AG04449 (cell line): ENCODE measurements at regions of chr17 and their contacts with region 1.

Region 1: GRCh38 chr17:29148790-29149430 is 31.3 kb downstream of the MYO18A start:
- DNase-seq: no peak
- H3K4me3 ChIP-seq: peak overlapping the region; percentile 54
- CTCF ChIP-seq: peak; percentile 96

Region 2: GRCh38 chr17:29032857-29033197 is 116.1 kb before region 1 on chr17:
- CTCF ChIA-PET with region 1: no interaction called
- POLR2A ChIA-PET with region 1: no interaction called
- DNase-seq: no peak
- H3K4me3 ChIP-seq: no peak overlapping the region
- CTCF ChIP-seq: no peak

Region 3: DNA sequence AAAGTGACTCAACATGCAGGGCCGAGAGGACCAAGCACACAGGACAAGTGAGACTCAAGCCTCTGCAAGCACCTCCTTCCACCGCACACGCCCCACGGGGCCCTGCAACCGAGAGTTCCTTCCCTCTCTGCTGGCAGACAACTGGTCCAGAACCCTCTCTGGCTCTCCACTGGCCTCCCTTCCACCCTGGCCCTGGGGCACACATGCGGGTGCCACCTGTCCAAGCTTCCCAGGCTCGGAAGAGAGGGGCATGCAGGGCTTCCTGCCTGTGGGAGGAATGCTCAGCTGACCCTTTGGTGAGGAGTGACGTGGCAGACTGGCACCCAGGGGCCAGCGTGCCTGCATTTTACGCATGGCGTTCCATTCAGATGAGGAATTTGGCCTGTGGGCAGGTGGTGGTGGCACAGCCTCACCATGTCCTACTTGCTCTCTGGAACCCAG is 46.1 kb before region 1 on chr17:
- CTCF ChIA-PET with region 1: no interaction called
- POLR2A ChIA-PET with region 1: no interaction called
- DNase-seq: no peak
- H3K4me3 ChIP-seq: no peak overlapping the region
- CTCF ChIP-seq: no peak

Region 4: GRCh38 chr17:29116804-29117772 is 31.8 kb before region 1 on chr17:
- CTCF ChIA-PET with region 1: interaction called, 138 read pairs
- POLR2A ChIA-PET with region 1: no interaction called
- DNase-seq: no peak
- H3K4me3 ChIP-seq: no peak overlapping the region
- CTCF ChIP-seq: peak; percentile 92

Region 5: GRCh38 chr17:29133146-29133713 is 15.7 kb before region 1 on chr17:
- CTCF ChIA-PET with region 1: interaction called, 118 read pairs
- POLR2A ChIA-PET with region 1: interaction called, 3 read pairs
- DNase-seq: no peak
- H3K4me3 ChIP-seq: no peak overlapping the region
- CTCF ChIP-seq: no peak

Region 6: DNA sequence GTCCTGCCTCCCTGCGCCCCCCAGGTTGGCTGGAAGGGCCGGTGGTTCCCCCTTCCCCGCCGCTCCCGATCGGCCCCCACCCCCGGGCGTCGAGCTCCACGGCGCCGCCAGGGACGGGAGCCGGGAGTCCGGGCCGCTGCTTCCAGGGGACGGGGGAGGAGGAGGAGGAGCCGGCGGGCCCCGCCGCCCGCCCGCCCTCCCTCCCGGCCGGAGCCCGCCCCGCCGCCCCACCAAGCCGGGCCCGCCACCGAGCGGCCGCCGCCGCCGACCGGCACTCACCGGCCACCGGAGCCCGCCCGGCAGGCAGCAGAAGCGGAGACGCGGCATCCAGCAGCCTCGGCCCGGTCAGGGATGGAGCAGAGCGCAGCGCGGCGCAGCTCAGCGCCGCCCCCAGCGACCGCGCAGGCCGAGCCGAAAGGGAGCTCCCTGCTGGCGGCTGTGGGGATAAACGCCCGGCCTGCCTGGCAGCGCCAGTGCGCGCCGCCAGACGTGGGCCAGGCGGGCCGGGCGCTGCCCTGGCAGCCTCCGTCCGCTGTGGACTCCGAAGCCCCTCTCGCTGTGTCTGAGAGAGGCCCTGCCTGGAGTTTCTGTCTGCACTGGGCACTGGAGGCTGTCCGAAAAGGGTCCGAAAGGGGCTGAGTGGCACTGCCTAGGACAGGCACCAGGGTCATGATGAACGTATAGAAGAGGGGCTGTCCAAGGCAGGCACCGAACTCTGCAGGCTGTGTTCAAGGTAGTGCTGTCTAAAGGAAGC is 31.3 kb after region 1 on chr17 and contains the start of gene MYO18A:
- CTCF ChIA-PET with region 1: interaction called, 239 read pairs
- POLR2A ChIA-PET with region 1: interaction called, 7 read pairs
- DNase-seq: no peak
- H3K4me3 ChIP-seq: peak within 1 kb of the TSS; percentile 65
- CTCF ChIP-seq: peak; percentile 94

Region 7: GRCh38 chr17:29219378-29220047 is 70.6 kb after region 1 on chr17:
- CTCF ChIA-PET with region 1: interaction called, 454 read pairs
- POLR2A ChIA-PET with region 1: interaction called, 4 read pairs
- DNase-seq: no peak
- H3K4me3 ChIP-seq: no peak overlapping the region
- CTCF ChIP-seq: peak; percentile 87

Region 8: GRCh38 chr17:29241015-29241963 is 92.4 kb after region 1 on chr17:
- CTCF ChIA-PET with region 1: interaction called, 13 read pairs
- POLR2A ChIA-PET with region 1: no interaction called
- DNase-seq: peak; percentile 89
- H3K4me3 ChIP-seq: no peak overlapping the region
- CTCF ChIP-seq: no peak

Region 9: DNA sequence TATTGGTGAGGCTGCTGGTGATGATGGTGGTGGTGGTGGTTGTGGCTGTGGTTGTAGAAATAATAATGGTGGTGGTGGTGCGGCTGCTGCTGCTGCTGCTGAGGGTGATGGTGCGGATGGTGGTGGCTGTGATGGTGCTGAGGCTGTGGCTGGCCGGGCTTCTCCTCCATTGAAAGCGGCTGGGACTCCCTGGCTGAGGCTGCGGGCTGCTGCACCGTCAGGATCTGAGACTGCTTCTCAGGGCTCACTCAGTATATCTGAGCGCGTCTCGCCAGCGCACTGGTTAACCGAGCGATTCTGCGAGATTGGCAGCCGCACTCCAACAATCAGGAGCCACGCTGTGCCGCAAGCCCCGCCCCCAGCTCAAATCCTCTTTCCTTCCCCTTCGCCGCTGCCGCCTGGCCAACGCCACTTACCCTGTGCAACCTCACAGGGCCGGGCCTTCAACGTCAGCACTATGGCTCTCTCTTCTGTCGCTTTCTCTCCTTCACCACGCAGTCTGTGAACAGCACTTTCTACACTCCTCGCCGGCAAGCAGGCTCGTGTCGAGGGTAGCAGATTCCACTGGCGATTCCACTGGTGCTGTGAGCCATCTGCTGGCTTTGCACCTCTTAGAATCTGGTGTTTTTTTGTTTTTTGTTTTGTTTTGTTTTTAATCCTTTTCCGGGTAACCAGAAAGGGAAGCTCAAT is 145.1 kb after region 1 on chr17 and contains the start of gene NUFIP2:
- CTCF ChIA-PET with region 1: interaction called, 51 read pairs
- POLR2A ChIA-PET with region 1: interaction called, 5 read pairs
- DNase-seq: peak; percentile 83
- H3K4me3 ChIP-seq: peak within 1 kb of the TSS; percentile 99
- CTCF ChIP-seq: no peak